MCF 10A (cell line): ENCODE measurements at regions of chr7 and their contacts with region 1.

Region 1: GRCh38 chr7:87219545-87220025 is at the start of gene TMEM243:
- DNase-seq: peak; percentile 56
- H3K4me3 Mint-ChIP-seq: peak within 1 kb of the TSS; percentile 98
- H3K27ac Mint-ChIP-seq: peak within 1 kb of the TSS; percentile 86
- H3K4me1 Mint-ChIP-seq: peaks cover 26% of the 10 kb centered on the region
- H3K27me3 Mint-ChIP-seq: no peaks in the 10 kb centered on the region
- CTCF ChIP-seq: no peak
- total RNA-seq, gene TMEM243: 19.9 and 23.0 TPM in 2 replicates

Region 2: GRCh38 chr7:87038993-87039716 is 180.4 kb before region 1 on chr7:
- CTCF ChIA-PET with region 1: no interaction called
- POLR2A ChIA-PET with region 1: interaction called, 15 read pairs
- intact Hi-C with region 1: no loop called
- DNase-seq: peak; percentile 13
- H3K4me3 Mint-ChIP-seq: peak overlapping the region; percentile 81
- H3K27ac Mint-ChIP-seq: peak overlapping the region; percentile 94
- H3K4me1 Mint-ChIP-seq: peaks cover 12% of the 10 kb centered on the region
- H3K27me3 Mint-ChIP-seq: peaks cover 11% of the 10 kb centered on the region
- CTCF ChIP-seq: no peak

Region 3: DNA sequence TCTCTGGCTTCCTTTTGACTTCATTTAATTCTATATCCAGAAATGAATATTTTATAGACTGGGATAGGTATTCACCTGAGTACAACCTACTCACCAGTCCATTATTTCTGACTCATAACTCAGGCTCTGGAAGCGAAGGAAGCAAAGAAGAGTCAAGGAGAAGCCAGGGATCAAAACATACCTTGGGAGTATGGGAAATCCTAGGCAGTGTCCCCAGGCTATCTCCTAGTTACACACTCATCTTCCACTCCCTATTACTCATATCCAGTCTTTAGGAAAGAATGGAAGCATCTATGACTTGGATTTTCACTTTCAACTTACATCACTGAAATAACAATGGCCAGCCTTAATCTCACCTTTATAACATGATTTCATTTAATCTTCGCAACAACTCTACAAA is 119.3 kb before region 1 on chr7:
- CTCF ChIA-PET with region 1: no interaction called
- POLR2A ChIA-PET with region 1: no interaction called
- intact Hi-C with region 1: no loop called
- DNase-seq: peak; percentile 74
- H3K4me3 Mint-ChIP-seq: no peak overlapping the region
- H3K27ac Mint-ChIP-seq: no peak overlapping the region
- H3K4me1 Mint-ChIP-seq: no peaks in the 10 kb centered on the region
- H3K27me3 Mint-ChIP-seq: peaks cover under 1% of the 10 kb centered on the region
- CTCF ChIP-seq: no peak

Region 4: GRCh38 chr7:87199700-87200450 is 19.7 kb before region 1 on chr7:
- CTCF ChIA-PET with region 1: interaction called, 4 read pairs
- POLR2A ChIA-PET with region 1: interaction called, 15 read pairs
- intact Hi-C with region 1: loop called (anchors 2 kb)
- DNase-seq: no peak
- H3K4me3 Mint-ChIP-seq: no peak overlapping the region
- H3K27ac Mint-ChIP-seq: no peak overlapping the region
- H3K4me1 Mint-ChIP-seq: no peaks in the 10 kb centered on the region
- H3K27me3 Mint-ChIP-seq: no peaks in the 10 kb centered on the region
- CTCF ChIP-seq: no peak

Region 5: DNA sequence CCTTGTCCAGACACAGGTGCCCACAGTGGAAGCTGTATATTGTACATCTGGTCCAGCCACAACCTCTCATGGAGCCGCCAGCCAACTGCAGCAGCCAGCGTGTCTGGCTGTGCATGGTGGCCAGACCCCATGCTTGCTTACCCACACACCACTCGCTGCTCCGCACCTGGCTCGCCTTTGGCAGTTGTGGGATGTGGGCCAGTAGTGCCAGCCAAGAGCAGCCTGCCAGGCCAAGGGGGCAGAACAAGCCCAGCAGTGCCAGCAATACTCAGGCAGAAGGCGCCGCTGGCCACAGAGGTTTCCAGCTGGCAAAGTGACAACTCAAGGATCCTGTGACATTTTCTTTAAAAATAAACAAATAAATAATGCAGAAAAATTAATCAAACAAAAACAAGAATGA is 11.7 kb after region 1 on chr7:
- CTCF ChIA-PET with region 1: interaction called, 44 read pairs
- POLR2A ChIA-PET with region 1: interaction called, 7 read pairs
- intact Hi-C with region 1: no loop called
- DNase-seq: no peak
- H3K4me3 Mint-ChIP-seq: no peak overlapping the region
- H3K27ac Mint-ChIP-seq: no peak overlapping the region
- H3K4me1 Mint-ChIP-seq: no peaks in the 10 kb centered on the region
- H3K27me3 Mint-ChIP-seq: peaks cover 12% of the 10 kb centered on the region
- CTCF ChIP-seq: no peak

Region 6: DNA sequence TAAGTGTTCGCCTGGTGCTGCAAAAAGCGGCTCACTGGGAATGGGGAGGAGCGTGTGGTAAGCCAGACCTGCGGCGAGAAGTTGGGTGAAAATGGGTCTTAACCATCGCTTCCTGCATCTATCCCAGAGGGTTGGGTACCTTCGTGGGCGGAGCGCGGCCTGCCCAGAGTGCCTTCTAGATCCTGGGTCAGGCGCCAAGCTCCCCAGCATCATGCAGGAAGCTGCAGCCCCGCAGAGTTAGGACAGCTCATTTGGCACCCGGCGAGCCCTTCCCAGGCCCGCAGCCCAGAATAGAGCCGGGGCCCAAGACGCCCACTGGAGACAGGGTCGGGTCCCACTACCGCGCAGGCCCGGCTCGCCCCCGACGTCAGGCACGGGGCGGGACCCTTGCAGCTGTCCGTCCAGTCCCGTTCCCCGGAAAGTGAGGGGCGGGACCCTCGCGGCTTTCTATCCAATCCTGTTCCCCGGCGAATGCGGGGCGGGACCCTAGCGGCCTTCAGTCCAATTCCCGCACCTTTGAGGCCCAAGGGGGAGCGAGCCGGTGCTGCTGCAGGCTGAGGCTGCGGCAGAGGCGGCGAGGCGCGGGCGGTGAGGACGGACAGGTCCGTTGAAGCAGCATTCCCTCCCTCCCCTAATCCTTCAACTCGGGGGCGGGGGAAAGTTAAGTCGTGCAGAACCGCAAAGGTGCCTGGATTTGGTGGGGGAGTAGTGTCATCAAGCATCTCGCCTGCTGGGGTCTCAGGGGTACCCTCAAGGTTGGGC is 125.8 kb after region 1 on chr7 and contains the start of gene CROT:
- CTCF ChIA-PET with region 1: no interaction called
- POLR2A ChIA-PET with region 1: interaction called, 13 read pairs
- intact Hi-C with region 1: no loop called
- DNase-seq: peak; percentile 96
- H3K4me3 Mint-ChIP-seq: peak within 1 kb of the TSS; percentile 99
- H3K27ac Mint-ChIP-seq: peak within 1 kb of the TSS; percentile 88
- H3K4me1 Mint-ChIP-seq: peaks cover 28% of the 10 kb centered on the region
- H3K27me3 Mint-ChIP-seq: no peaks in the 10 kb centered on the region
- CTCF ChIP-seq: no peak
- total RNA-seq, gene CROT: 5.7 and 6.5 TPM in 2 replicates